ENCODE measurements at regions of chr7 and their contacts with region 1.

Region 1: DNA sequence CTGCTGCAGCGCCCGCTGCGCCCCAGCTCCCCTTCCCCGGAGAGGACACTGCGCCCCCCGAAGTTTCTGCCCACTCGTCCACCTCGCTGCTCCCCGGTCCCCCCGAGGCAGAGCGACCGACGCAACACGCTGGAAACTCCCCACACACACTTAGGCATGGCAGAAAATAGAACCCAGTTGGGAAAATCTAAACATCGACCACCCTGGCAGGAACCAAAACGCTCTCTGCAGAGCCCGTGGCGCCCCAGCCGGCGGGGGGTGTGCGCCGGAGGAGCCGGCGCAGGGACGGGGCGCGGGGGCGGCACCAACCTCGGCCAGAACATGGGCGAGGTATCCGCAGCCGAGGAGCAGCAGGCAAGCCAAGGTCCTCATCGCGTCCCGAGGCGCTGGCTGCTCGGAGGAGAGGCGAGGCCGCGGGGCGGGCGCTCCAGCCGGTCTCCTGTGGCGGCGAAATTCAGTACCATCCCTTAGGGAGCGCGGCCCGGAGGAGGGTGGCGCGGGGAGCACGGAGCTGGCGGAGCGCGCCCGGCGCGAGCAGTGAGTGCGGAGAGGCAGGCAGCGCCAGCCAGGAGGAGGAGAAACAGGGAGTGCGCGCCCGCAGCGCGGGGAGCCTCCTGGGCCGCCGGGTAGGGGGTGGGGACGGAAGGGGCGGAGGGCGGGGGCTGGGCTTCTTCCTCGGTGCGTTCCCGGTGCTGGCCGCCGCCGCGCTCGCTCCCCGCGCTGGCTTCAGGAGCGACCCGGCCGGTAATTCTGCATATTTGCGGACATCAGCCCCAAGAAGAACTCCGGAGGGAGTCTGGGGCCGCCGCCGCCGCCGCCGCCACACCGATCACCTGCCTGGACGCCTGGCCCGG is 789 bp downstream of the PDGFA start:
- DNase-seq: peak; percentile 69
- ATAC-seq: peak; percentile 59
- H3K4me3 ChIP-seq: peak overlapping the region; percentile 95
- H3K27ac ChIP-seq: no peak overlapping the region
- H3K4me1 ChIP-seq: peaks cover 11% of the 10 kb centered on the region; the same call in 1 of the 2 replicates
- H3K27me3 ChIP-seq: peaks cover 18% of the 10 kb centered on the region
- CTCF ChIP-seq: no peak

Region 2: GRCh38 chr7:360454-361100 is 158.3 kb before region 1 on chr7:
- CTCF ChIA-PET with region 1: no interaction called
- POLR2A ChIA-PET with region 1: interaction called, 10 read pairs
- intact Hi-C with region 1: no loop called
- DNase-seq: no peak
- ATAC-seq: no peak
- H3K4me3 ChIP-seq: no peak overlapping the region
- H3K27ac ChIP-seq: no peak overlapping the region
- H3K4me1 ChIP-seq: no peaks in the 10 kb centered on the region; the same call in 1 of the 2 replicates
- H3K27me3 ChIP-seq: no peaks in the 10 kb centered on the region
- CTCF ChIP-seq: no peak

Region 3: GRCh38 chr7:451628-452225 is 67.1 kb before region 1 on chr7:
- CTCF ChIA-PET with region 1: no interaction called
- POLR2A ChIA-PET with region 1: no interaction called
- intact Hi-C with region 1: no loop called
- DNase-seq: no peak
- ATAC-seq: no peak
- H3K4me3 ChIP-seq: no peak overlapping the region
- H3K27ac ChIP-seq: no peak overlapping the region
- H3K4me1 ChIP-seq: no peaks in the 10 kb centered on the region
- H3K27me3 ChIP-seq: no peaks in the 10 kb centered on the region
- CTCF ChIP-seq: no peak

Region 4: DNA sequence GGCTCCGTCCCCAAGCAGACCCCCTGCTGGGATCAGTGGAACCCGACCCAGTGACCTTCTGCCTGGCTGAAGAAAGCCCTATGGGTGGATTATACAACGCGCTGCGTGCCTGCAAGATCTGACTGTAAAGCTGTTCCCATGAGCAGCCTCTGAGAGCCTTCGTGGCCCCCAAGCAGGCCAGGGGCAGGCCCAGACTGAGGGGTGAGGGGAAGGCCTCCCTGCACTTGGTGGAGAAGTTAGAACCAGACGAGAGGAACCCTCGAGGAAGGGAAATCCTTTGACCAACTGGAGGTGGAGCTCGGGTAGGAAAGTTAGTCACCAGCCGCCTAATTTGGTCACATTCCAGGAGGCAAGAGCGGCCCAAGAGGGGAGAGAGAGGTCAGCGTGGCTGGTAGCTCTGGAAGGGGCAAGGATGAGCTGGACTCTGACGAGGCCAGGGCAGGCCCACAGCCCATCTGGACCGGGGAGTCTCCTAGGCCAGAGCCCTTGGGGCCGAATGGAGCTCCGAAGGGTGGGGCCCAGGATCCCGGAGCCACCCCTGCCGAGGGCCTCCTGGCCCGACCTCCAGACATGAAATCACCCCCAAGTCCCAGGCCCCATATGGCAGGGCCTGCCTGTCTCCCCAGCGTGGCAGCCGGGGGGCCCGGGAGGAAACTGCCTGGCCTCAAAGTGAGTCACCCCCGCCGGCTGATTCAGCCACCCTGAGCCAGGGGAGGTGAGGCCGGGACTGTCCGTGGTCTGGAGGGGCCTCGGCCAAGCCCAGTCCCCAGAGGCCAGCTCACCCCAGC is 24.1 kb after region 1 on chr7:
- CTCF ChIA-PET with region 1: no interaction called
- POLR2A ChIA-PET with region 1: interaction called, 3 read pairs
- intact Hi-C with region 1: loop called (anchors 2 kb)
- DNase-seq: peak; percentile 81
- ATAC-seq: peak; percentile 49
- H3K4me3 ChIP-seq: no peak overlapping the region
- H3K27ac ChIP-seq: peak overlapping the region; percentile 88
- H3K4me1 ChIP-seq: peaks cover 54% of the 10 kb centered on the region
- H3K27me3 ChIP-seq: no peaks in the 10 kb centered on the region
- CTCF ChIP-seq: no peak

Region 5: DNA sequence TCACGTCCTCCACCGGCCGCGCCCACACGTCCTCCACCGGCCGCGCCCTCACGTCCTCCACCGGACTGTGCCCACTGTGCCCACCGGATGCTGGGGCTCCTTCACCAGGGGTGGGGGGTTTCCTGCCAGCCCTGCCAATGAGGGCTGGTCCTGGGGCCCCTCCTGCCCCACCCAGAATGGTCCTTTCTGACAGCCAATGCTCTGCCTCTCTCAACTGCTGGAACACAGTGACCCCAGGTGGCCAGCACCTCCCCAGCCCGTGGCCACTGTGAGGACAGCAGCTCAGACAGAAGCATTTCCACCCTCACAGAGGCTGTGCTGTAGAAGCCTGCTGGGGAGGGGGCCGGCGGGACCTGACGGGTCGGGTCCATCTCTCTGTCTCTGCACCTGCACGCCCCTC is 117.5 kb after region 1 on chr7:
- CTCF ChIA-PET with region 1: interaction called, 3 read pairs
- POLR2A ChIA-PET with region 1: no interaction called
- intact Hi-C with region 1: loop called (anchors 2 kb)
- DNase-seq: peak; percentile 71
- ATAC-seq: peak; percentile 86
- H3K4me3 ChIP-seq: peak overlapping the region; percentile 70
- H3K27ac ChIP-seq: peak overlapping the region; percentile 61
- H3K4me1 ChIP-seq: peaks cover 15% of the 10 kb centered on the region
- H3K27me3 ChIP-seq: no peaks in the 10 kb centered on the region
- CTCF ChIP-seq: peak; percentile 75

Region 6: GRCh38 chr7:876167-876967 is 357.5 kb after region 1 on chr7 and contains the start of gene GET4:
- CTCF ChIA-PET with region 1: no interaction called
- POLR2A ChIA-PET with region 1: no interaction called
- intact Hi-C with region 1: loop called (anchors 10 kb)
- DNase-seq: peak; percentile 90
- ATAC-seq: peak; percentile 80
- H3K4me3 ChIP-seq: peak within 1 kb of the TSS; percentile 97
- H3K27ac ChIP-seq: peak within 1 kb of the TSS; percentile 30
- H3K4me1 ChIP-seq: peaks cover 28% of the 10 kb centered on the region
- H3K27me3 ChIP-seq: no peaks in the 10 kb centered on the region
- CTCF ChIP-seq: no peak
- total RNA-seq, gene GET4: 96.7 and 115 TPM in 2 replicates